Ascending aorta (tissue), 2 donors: ENCODE measurements at regions of chr3 and their contacts with region 1.

Region 1: DNA sequence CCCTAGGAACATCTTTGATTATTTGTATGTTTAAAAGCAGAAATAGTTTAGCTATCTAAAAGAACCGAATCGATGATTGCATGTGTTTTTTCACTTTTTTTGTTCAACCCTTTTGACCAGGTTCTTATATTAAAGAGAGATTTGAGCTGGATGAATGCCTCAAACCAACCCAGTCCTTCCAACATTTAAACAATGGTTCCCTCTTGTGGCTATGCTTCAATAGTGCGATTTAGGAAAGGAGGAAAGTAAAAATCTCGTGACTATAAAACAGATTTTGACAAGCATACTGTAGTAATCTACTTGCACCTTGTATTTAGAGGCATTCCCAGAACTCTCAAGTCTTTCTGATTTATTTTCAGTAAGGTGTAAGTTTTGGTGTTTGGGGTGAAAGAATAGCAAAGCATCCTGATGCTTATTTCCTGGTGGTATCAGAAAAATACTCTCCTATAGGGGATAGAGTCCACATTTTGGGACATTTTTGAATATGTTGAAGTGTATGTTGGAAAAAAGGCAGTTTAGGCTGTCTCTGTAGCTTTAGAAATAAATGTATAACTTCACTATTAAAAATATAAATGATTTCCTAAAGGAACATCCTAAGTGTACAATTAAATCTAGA is 159.6 kb upstream of the KCNH8 start:
- DNase-seq: no peak
- H3K4me3 ChIP-seq: no peak overlapping the region
- H3K27ac ChIP-seq: no peak overlapping the region
- H3K4me1 ChIP-seq: no peaks in the 10 kb centered on the region
- H3K27me3 ChIP-seq: no peaks in the 10 kb centered on the region
- CTCF ChIP-seq: peak in 2 of 3 experiments; percentile 41 to 47

Region 2: DNA sequence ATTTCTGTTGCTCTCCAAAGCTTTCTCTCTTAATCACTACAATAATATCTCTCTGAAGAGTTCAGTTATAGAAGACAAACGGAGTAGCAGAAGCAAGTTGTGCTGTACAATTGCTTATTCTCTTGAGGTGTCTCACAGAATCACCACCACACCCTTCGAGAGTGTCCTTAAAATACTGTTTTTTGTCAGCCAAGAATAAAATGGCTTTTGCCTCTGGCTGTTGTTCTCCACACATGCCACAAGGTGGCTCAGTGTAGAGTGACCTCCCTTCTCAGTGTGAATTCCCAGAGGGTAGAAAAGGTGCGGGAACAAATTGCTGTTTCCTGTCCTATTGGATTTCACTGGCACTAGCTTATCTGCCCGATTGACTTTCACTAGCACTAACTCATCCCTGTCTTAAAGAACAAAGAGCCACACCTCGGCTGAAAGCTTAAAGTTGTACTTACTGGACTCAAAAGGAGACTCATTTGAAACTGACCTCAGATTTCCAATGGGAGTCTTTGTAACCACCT is 429.3 kb before region 1 on chr3:
- intact Hi-C with region 1: loop called (anchors 2 kb)
- DNase-seq: no peak
- H3K4me3 ChIP-seq: no peak overlapping the region
- H3K27ac ChIP-seq: no peak overlapping the region
- H3K4me1 ChIP-seq: no peaks in the 10 kb centered on the region
- H3K27me3 ChIP-seq: no peaks in the 10 kb centered on the region
- CTCF ChIP-seq: peak; percentile 31 to 63 (median 62)